PC-3 (cell line): ENCODE measurements at regions of chr12 and their contacts with region 1.

Region 1: GRCh38 chr12:50314629-50315312 is 31.5 kb upstream of the LIMA1 start:
- DNase-seq: peak; percentile 61
- ATAC-seq: no peak
- H3K4me3 ChIP-seq: no peak overlapping the region
- H3K27ac ChIP-seq: no peak overlapping the region
- H3K4me1 ChIP-seq: peaks cover 24% of the 10 kb centered on the region
- H3K27me3 ChIP-seq: no peaks in the 10 kb centered on the region
- CTCF ChIP-seq: peak; percentile 82

Region 2: GRCh38 chr12:50084775-50085614 is 229.8 kb before region 1 on chr12 and contains the start of gene SMARCD1:
- CTCF ChIA-PET with region 1: no interaction called
- POLR2A ChIA-PET with region 1: interaction called, 4 read pairs
- intact Hi-C with region 1: loop called (anchors 10 kb)
- DNase-seq: peak; percentile 92
- ATAC-seq: peak; percentile 77
- H3K4me3 ChIP-seq: peak within 1 kb of the TSS; percentile 78
- H3K27ac ChIP-seq: peak within 1 kb of the TSS; percentile 71
- H3K4me1 ChIP-seq: peaks cover 40% of the 10 kb centered on the region
- H3K27me3 ChIP-seq: no peaks in the 10 kb centered on the region
- CTCF ChIP-seq: peak; percentile 86
- total RNA-seq, gene SMARCD1: 105 and 109 TPM in 2 replicates

Region 3: GRCh38 chr12:50167041-50167828 is 147.5 kb before region 1 on chr12 and contains the start of gene CERS5:
- CTCF ChIA-PET with region 1: no interaction called
- POLR2A ChIA-PET with region 1: no interaction called
- intact Hi-C with region 1: no loop called
- DNase-seq: peak; percentile 99
- ATAC-seq: peak; percentile 98
- H3K4me3 ChIP-seq: peak within 1 kb of the TSS; percentile 95
- H3K27ac ChIP-seq: peak within 1 kb of the TSS; percentile 20; the same call in 1 of the 2 replicates
- H3K4me1 ChIP-seq: peaks cover 8% of the 10 kb centered on the region
- H3K27me3 ChIP-seq: no peaks in the 10 kb centered on the region
- CTCF ChIP-seq: no peak
- total RNA-seq, gene CERS5: 24.9 and 29.7 TPM in 2 replicates

Region 4: DNA sequence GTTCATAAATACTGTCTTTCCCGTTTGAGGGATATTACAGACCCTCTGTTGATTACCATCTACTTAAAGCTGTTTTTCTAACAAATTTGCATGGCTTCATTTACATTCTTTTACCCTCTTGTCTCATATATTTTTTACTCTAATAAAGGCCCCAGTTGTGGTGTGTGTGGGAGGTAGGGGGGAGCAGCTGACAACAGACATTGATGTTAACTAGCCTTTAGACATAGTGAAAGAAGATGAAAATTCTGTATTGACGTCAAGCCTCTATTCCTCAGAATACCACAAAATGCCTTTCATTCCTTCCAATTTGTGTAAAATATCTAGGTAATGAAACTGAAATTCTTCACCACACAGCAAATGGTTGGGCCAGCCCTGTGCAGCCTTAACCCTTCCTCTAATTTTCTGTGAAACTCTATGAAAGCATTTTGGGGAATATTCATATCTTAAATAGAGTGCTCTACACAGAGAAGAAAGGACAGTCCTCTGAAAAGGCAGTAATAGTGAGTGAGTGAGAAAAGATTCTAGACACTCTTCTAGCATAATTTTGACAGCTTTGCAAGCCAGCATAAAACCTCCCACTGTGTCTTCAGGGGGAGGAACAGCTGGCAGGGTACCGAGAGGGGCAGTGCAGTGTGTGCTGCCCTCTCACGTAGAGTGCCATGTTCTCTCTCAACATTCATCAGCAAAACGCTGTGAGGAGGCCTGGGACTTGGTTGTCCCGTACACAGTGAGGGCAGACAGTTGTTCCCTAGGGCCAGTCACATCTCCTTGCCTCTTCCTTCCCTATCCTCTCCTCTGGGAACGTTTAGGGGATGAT is 127.5 kb before region 1 on chr12:
- CTCF ChIA-PET with region 1: interaction called, 5 read pairs
- POLR2A ChIA-PET with region 1: no interaction called
- intact Hi-C with region 1: loop called (anchors 1 kb)
- DNase-seq: no peak
- ATAC-seq: no peak
- H3K4me3 ChIP-seq: no peak overlapping the region
- H3K27ac ChIP-seq: peak overlapping the region; percentile 2; the same call in 1 of the 2 replicates
- H3K4me1 ChIP-seq: peaks cover 26% of the 10 kb centered on the region
- H3K27me3 ChIP-seq: no peaks in the 10 kb centered on the region
- CTCF ChIP-seq: no peak

Region 5: DNA sequence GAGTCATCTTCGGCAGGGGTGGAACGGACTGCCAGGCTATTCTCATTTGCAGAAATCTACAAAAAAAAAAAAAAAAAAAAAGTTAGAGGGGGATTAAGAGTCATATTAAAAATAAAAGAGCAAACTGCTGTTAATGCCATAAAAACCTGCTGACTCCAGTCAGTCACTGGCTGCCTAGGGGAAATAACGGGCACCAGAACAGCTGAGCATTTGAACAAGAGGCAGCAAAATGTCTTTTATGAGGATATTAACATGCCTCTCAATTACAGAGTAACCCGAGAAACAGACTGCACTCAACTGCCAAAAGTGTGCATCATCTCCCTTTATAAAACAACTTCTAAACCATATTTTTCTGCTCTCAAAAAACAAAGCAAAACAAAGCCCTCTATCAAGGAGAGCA is 118.9 kb before region 1 on chr12:
- CTCF ChIA-PET with region 1: no interaction called
- POLR2A ChIA-PET with region 1: no interaction called
- intact Hi-C with region 1: loop called (anchors 5 kb)
- DNase-seq: peak; percentile 49
- ATAC-seq: peak; percentile 88
- H3K4me3 ChIP-seq: no peak overlapping the region
- H3K27ac ChIP-seq: peak overlapping the region; percentile 62
- H3K4me1 ChIP-seq: peaks cover 45% of the 10 kb centered on the region
- H3K27me3 ChIP-seq: no peaks in the 10 kb centered on the region
- CTCF ChIP-seq: no peak

Region 6: DNA sequence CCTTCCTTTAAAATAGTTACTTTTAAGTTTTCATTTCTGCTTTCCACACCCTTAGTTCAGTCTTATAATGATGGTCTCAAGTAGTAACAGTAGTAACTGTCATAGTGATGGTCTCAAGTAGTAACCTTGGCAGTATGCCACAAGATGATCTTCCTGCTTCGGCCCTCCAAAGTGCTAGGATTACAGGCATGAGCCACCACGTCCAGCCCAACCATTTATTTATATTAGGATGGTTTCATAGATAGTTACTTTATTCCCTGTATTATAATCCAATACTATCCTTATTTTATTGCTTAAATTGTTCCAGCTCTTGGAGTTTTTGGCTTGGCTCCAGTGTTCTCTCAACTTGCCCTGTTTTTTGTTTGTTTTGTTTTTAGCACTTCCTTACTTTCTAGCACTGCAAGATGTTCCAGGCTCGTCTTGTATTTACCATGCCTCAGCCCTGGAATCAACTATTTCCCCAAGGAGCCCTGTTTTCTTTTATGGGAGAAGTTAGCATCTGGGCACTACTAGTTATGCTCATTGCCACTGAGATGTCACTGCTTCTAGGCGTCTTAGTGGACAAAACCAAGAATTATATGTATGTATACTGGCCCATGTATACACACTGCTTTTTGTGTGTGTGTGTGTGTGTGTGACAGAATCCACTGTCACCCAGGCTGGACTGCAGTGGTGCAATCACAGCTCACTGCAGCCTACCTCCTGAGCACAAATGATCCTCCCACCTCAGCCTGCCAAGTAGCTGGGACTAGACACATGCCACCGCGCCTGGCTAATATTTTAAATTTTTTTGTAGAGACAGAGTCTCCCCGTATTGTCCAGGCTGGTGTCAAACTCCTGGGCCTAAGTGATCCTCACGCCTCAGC is 56.9 kb before region 1 on chr12:
- CTCF ChIA-PET with region 1: no interaction called
- POLR2A ChIA-PET with region 1: no interaction called
- intact Hi-C with region 1: loop called (anchors 2 kb)
- DNase-seq: peak; percentile 62
- ATAC-seq: peak; percentile 18
- H3K4me3 ChIP-seq: no peak overlapping the region
- H3K27ac ChIP-seq: peak overlapping the region; percentile 60
- H3K4me1 ChIP-seq: peaks cover 82% of the 10 kb centered on the region
- H3K27me3 ChIP-seq: no peaks in the 10 kb centered on the region
- CTCF ChIP-seq: no peak

Region 7: DNA sequence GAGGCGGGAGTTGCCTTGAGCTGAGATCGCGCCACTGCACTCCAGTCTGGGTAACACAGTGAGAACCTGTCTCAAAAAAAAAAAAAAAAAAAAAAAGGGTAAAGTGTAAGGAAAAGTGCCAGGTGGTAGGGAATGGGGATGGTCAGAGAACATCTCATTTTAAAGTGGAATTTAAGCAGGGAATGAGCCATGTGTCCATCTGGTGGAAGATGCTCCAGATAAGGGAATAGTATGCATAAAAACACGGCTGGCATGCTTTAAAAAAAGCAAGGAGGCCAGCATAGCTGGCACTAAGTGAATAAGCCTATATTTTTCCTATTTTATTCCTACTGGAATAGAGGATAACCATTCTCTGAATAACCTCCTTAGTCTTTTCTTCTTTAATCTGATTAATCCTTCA is 47.9 kb after region 1 on chr12:
- CTCF ChIA-PET with region 1: no interaction called
- POLR2A ChIA-PET with region 1: no interaction called
- intact Hi-C with region 1: no loop called
- DNase-seq: no peak
- ATAC-seq: no peak
- H3K4me3 ChIP-seq: no peak overlapping the region
- H3K27ac ChIP-seq: no peak overlapping the region
- H3K4me1 ChIP-seq: no peaks in the 10 kb centered on the region
- H3K27me3 ChIP-seq: no peaks in the 10 kb centered on the region
- CTCF ChIP-seq: no peak

Region 8: GRCh38 chr12:50637870-50638481 is 323.2 kb after region 1 on chr12:
- CTCF ChIA-PET with region 1: no interaction called
- POLR2A ChIA-PET with region 1: no interaction called
- intact Hi-C with region 1: loop called (anchors 10 kb)
- DNase-seq: peak; percentile 73
- ATAC-seq: no peak
- H3K4me3 ChIP-seq: no peak overlapping the region
- H3K27ac ChIP-seq: peak overlapping the region; percentile 22
- H3K4me1 ChIP-seq: peaks cover 54% of the 10 kb centered on the region
- H3K27me3 ChIP-seq: no peaks in the 10 kb centered on the region
- CTCF ChIP-seq: peak; percentile 88